HCT116 (cell line): ENCODE measurements at regions of chr3 and their contacts with region 1.

Region 1: GRCh38 chr3:59857589-59858346 is 807.9 kb upstream of the CFAP20DC start:
- DNase-seq: peak; percentile 73
- ATAC-seq: peak; percentile 100
- H3K4me3 ChIP-seq: no peak overlapping the region
- H3K27ac ChIP-seq: no peak overlapping the region
- H3K4me1 ChIP-seq: peaks cover 0 to 7% of the 10 kb centered on the region in 2 experiments; a peak in 2 of 4 replicates
- H3K27me3 ChIP-seq: no peaks in the 10 kb centered on the region
- CTCF ChIP-seq: peak; percentile 78 to 95 (median 80)
- POLR2A ChIP-seq: no peak
- RAD21 ChIP-seq: peak; percentile 81

Region 2: GRCh38 chr3:58824285-58824684 is 1033.5 kb before region 1 on chr3:
- CTCF ChIA-PET with region 1: interaction called, 13 read pairs
- POLR2A ChIA-PET with region 1: no interaction called
- RAD21 ChIA-PET with region 1: no interaction called
- intact Hi-C with region 1: no loop called
- DNase-seq: peak; percentile 42
- ATAC-seq: peak; percentile 84
- H3K4me3 ChIP-seq: no peak overlapping the region
- H3K27ac ChIP-seq: no peak overlapping the region
- H3K4me1 ChIP-seq: no peaks in the 10 kb centered on the region
- H3K27me3 ChIP-seq: no peaks in the 10 kb centered on the region
- CTCF ChIP-seq: peak; percentile 53 to 90 (median 84); a peak in 5 of 6 replicates
- POLR2A ChIP-seq: no peak
- RAD21 ChIP-seq: peak; percentile 89

Region 3: GRCh38 chr3:59212128-59212779 is 645.5 kb before region 1 on chr3:
- CTCF ChIA-PET with region 1: no interaction called
- POLR2A ChIA-PET with region 1: no interaction called
- RAD21 ChIA-PET with region 1: no interaction called
- intact Hi-C with region 1: loop called (anchors 5 kb)
- DNase-seq: peak; percentile 22
- ATAC-seq: peak; percentile 85
- H3K4me3 ChIP-seq: no peak overlapping the region
- H3K27ac ChIP-seq: no peak overlapping the region
- H3K4me1 ChIP-seq: no peaks in the 10 kb centered on the region
- H3K27me3 ChIP-seq: peaks cover 24% of the 10 kb centered on the region; the same call in 1 of the 2 replicates
- CTCF ChIP-seq: peak; percentile 38 to 71 (median 55); a peak in 5 of 6 replicates
- POLR2A ChIP-seq: no peak
- RAD21 ChIP-seq: peak; percentile 70

Region 4: DNA sequence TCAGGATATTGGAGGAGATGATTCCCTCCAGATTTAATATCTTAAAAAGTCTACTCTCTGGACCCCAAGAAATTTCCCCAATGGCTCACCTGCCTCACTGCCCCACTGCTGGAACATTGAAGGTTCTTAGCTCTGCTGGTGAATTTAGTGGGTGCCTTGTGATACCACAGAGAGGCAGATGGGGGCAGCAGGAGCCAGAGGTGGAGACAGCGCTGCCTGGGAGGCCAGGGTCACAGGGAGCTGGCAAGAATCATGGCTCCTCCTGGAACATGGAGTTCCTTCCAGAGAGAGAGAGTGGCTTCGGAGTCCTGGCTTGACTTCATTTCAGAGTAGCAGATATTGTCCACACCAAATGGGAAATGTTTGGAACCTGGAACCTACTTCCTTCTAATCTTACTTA is 544.4 kb before region 1 on chr3:
- CTCF ChIA-PET with region 1: interaction called, 6 read pairs
- POLR2A ChIA-PET with region 1: no interaction called
- RAD21 ChIA-PET with region 1: interaction called in 1 of 2 experiments, 3 read pairs
- intact Hi-C with region 1: loop called (anchors 5 kb)
- DNase-seq: peak; percentile 28
- ATAC-seq: peak; percentile 99
- H3K4me3 ChIP-seq: no peak overlapping the region
- H3K27ac ChIP-seq: no peak overlapping the region
- H3K4me1 ChIP-seq: no peaks in the 10 kb centered on the region
- H3K27me3 ChIP-seq: peaks cover 22% of the 10 kb centered on the region
- CTCF ChIP-seq: peak; percentile 44 to 70 (median 67); a peak in 5 of 6 replicates
- POLR2A ChIP-seq: no peak
- RAD21 ChIP-seq: peak; percentile 69